ENCODE measurements at regions of chr3 and their contacts with region 1.

Region 1: DNA sequence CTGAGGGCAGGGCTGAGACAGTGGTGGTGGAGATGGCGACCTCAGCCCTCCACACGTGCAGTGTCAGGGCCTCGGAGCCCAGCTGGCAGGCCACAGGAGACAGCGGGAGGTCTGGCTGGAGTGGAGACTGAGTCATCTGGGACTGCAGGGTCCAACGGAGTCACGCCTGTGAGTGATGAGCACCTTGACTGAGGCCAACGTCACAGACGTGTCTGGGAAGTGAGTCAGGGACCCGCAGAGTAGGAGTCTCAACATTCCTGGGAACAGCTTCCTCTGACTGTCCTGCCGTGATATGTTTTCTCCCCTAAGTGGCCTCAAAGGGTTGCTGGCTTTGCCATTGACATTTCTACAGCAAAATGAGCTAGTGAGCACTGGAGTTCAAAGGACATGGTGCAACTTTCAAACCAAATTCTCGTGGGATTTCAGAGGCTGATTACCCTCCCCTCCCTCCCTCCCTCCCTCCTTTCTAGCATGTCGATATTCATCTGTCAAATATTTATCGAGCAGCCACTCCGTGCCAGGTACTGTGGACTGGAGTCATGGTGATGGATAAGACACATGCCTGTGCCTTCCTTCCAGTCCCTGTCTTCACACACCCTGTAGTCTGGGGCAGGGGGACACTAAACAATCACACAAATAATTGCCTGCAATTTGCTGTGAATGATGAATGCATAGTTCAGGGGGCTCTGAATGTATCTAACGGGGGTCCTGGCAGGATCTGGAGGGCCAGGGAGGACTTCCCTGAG is 53.3 kb upstream of the AMOTL2 start:
- DNase-seq: peak; percentile 77
- H3K4me3 ChIP-seq: no peak overlapping the region
- H3K27ac ChIP-seq: peak overlapping the region; percentile 73
- H3K4me1 ChIP-seq: peaks cover 8% of the 10 kb centered on the region
- H3K27me3 ChIP-seq: peaks cover 5 to 11% of the 10 kb centered on the region in 2 experiments
- CTCF ChIP-seq: no peak
- POLR2A ChIP-seq: no peak

Region 2: GRCh38 chr3:134078169-134078821 is 349.3 kb before region 1 on chr3:
- CTCF ChIA-PET with region 1: no interaction called
- POLR2A ChIA-PET with region 1: no interaction called
- dilution Hi-C with region 1: no loop called
- intact Hi-C with region 1: no loop called
- DNase-seq: no peak
- H3K4me3 ChIP-seq: no peak overlapping the region
- H3K27ac ChIP-seq: no peak overlapping the region
- H3K4me1 ChIP-seq: no peaks in the 10 kb centered on the region
- H3K27me3 ChIP-seq: no peaks in the 10 kb centered on the region
- CTCF ChIP-seq: no peak
- POLR2A ChIP-seq: no peak

Region 3: GRCh38 chr3:134406331-134407238 is 21.0 kb before region 1 on chr3:
- CTCF ChIA-PET with region 1: no interaction called
- POLR2A ChIA-PET with region 1: no interaction called
- dilution Hi-C with region 1: no loop called
- intact Hi-C with region 1: loop called (anchors 2 kb)
- DNase-seq: peak; percentile 28
- H3K4me3 ChIP-seq: peak overlapping the region in 2 of 3 experiments; percentile 5 to 29
- H3K27ac ChIP-seq: no peak overlapping the region
- H3K4me1 ChIP-seq: no peaks in the 10 kb centered on the region
- H3K27me3 ChIP-seq: peaks cover 48 to 58% of the 10 kb centered on the region in 2 experiments
- CTCF ChIP-seq: no peak
- POLR2A ChIP-seq: no peak

Region 4: DNA sequence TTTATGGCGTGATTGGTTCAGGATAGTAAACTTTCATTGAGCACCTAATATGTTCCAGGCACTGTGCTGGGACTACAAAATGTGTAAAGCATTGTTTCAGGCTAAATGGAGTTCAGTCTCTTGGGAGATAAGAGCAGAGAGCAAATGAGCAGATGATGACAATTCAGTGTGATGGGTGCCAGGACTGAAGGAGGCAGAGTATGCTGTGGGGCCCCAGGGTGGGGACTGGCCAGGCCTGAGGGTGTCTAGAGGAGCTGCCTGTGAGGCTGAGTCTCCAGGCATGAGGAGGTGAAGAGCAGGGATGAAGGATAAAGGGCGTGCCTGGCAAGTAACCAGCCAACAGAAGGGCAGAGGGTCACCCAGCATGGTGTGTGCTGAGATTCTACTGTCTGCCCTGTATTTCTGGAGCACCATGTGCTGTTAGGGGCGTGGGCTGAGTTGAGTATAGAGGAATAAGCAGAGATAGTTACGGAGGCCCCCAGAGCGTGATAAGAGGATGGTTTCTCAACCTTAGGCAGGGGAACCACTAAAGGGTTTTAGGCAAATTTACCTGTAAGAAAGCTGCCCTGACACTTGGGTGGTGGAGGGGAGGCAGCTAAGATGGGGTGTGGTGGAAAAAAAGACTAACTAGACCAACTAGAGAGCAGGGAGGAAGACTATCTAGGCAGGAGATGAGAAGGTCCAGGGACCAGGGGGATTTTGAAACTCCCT is 406.0 kb after region 1 on chr3:
- CTCF ChIA-PET with region 1: no interaction called
- POLR2A ChIA-PET with region 1: no interaction called
- dilution Hi-C with region 1: no loop called
- intact Hi-C with region 1: no loop called
- DNase-seq: no peak
- H3K4me3 ChIP-seq: no peak overlapping the region
- H3K27ac ChIP-seq: no peak overlapping the region
- H3K4me1 ChIP-seq: no peaks in the 10 kb centered on the region
- H3K27me3 ChIP-seq: no peaks in the 10 kb centered on the region
- CTCF ChIP-seq: no peak
- POLR2A ChIP-seq: no peak

Region 5: GRCh38 chr3:134904241-134904771 is 476.7 kb after region 1 on chr3:
- CTCF ChIA-PET with region 1: no interaction called
- POLR2A ChIA-PET with region 1: no interaction called
- dilution Hi-C with region 1: no loop called
- intact Hi-C with region 1: no loop called
- DNase-seq: no peak
- H3K4me3 ChIP-seq: no peak overlapping the region
- H3K27ac ChIP-seq: no peak overlapping the region
- H3K4me1 ChIP-seq: no peaks in the 10 kb centered on the region
- H3K27me3 ChIP-seq: no peaks in the 10 kb centered on the region
- CTCF ChIP-seq: no peak
- POLR2A ChIP-seq: no peak